Activated CD8-positive, alpha-beta T cell treated with anti-CD3 and anti-CD28 coated beads, Interleukin-2, amount 10 ng/mL, durations not matched to agents 7 days and 5 days (primary cell): ENCODE measurements at regions of chr9 and their contacts with region 1.

Region 1: GRCh38 chr9:91193658-91194391 is 167.9 kb downstream of the AUH start:
- DNase-seq: peak; percentile 93
- ATAC-seq: peak; percentile 79
- H3K4me3 Mint-ChIP-seq: peak overlapping the region; percentile 70
- H3K27ac Mint-ChIP-seq: peak overlapping the region; percentile 95
- H3K4me1 Mint-ChIP-seq: peaks cover 85% of the 10 kb centered on the region
- H3K27me3 Mint-ChIP-seq: no peaks in the 10 kb centered on the region

Region 2: GRCh38 chr9:90929626-90930025 is 264.2 kb before region 1 on chr9:
- CTCF ChIA-PET with region 1: no interaction called
- POLR2A ChIA-PET with region 1: no interaction called
- DNase-seq: no peak
- ATAC-seq: no peak
- H3K4me3 Mint-ChIP-seq: no peak overlapping the region
- H3K27ac Mint-ChIP-seq: no peak overlapping the region
- H3K4me1 Mint-ChIP-seq: no peaks in the 10 kb centered on the region
- H3K27me3 Mint-ChIP-seq: peaks cover 20% of the 10 kb centered on the region

Region 3: GRCh38 chr9:91117959-91118703 is 75.7 kb before region 1 on chr9:
- CTCF ChIA-PET with region 1: no interaction called
- POLR2A ChIA-PET with region 1: no interaction called
- DNase-seq: no peak
- ATAC-seq: no peak
- H3K4me3 Mint-ChIP-seq: no peak overlapping the region
- H3K27ac Mint-ChIP-seq: no peak overlapping the region
- H3K4me1 Mint-ChIP-seq: peaks cover 43% of the 10 kb centered on the region
- H3K27me3 Mint-ChIP-seq: no peaks in the 10 kb centered on the region

Region 4: GRCh38 chr9:91138760-91139159 is 55.1 kb before region 1 on chr9:
- CTCF ChIA-PET with region 1: no interaction called
- POLR2A ChIA-PET with region 1: no interaction called
- DNase-seq: no peak
- ATAC-seq: no peak
- H3K4me3 Mint-ChIP-seq: no peak overlapping the region
- H3K27ac Mint-ChIP-seq: no peak overlapping the region
- H3K4me1 Mint-ChIP-seq: peaks cover 42% of the 10 kb centered on the region
- H3K27me3 Mint-ChIP-seq: no peaks in the 10 kb centered on the region

Region 5: DNA sequence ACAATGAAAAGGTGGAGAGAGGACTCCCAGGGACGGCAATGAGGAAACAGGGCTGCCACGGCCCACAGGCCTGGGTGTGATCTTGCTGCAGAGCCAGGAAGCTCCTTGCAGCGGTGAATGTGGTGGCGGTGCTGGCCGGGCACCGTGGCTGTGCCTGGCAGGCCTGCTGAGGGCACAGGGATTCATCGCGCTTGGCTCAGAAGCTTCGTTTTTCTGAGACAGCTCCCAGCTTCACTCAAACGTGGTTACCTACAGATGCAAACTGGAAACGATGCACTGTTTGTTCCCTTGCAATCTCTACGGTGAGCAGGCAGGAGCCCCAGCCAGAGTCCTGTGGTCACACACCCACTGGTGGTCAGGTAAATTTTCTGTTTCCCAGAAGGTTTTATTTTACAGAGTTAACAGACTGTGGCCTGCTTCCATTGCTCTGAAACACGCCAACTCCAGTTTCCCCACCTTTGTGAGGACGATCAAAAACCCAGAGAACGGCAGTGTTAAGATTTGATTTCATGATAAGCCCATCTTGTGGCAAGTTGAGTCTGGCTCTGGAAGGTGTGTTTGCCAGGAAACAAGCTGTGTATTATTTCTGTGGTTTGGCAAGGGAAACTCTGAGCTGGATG is 16.1 kb before region 1 on chr9:
- CTCF ChIA-PET with region 1: interaction called, 23 read pairs
- POLR2A ChIA-PET with region 1: interaction called, 9 read pairs
- DNase-seq: peak; percentile 61
- ATAC-seq: peak; percentile 59
- H3K4me3 Mint-ChIP-seq: peak overlapping the region; percentile 55
- H3K27ac Mint-ChIP-seq: peak overlapping the region; percentile 94
- H3K4me1 Mint-ChIP-seq: peaks cover 61% of the 10 kb centered on the region
- H3K27me3 Mint-ChIP-seq: no peaks in the 10 kb centered on the region

Region 6: GRCh38 chr9:91214086-91214485 is 20.3 kb after region 1 on chr9:
- CTCF ChIA-PET with region 1: no interaction called
- POLR2A ChIA-PET with region 1: no interaction called
- DNase-seq: no peak
- ATAC-seq: no peak
- H3K4me3 Mint-ChIP-seq: no peak overlapping the region
- H3K27ac Mint-ChIP-seq: no peak overlapping the region
- H3K4me1 Mint-ChIP-seq: peaks cover 21% of the 10 kb centered on the region
- H3K27me3 Mint-ChIP-seq: no peaks in the 10 kb centered on the region